ENCODE measurements at regions of chr3 and their contacts with region 1.

Region 1: DNA sequence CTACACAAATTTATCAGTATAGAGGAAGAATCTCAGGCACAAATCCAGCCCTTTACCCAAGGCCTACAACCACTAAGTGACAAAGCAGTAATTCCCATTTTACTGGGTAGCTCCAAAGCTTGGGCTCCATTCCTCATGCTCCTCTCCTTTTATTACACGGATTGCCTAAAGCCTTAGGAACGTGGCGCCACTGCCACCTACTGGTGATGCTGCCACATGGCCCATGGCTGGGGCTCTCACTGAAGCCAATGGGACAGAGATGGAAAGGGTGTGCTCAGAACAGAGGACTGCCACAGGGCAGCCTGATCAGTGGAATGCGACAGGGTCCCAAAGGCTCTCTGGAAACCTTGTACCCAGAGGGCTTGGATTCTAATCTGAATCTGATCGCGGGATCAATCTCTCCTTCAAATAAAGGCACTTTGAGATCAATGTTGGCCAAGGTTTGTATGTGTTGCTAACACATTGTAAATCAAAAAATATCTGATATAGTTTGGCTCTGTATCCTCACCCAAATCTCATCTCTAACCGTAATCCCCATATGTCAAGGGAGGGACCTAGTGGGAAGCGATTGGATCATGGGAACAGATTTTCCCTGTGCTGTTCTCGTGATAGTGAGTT is 33.5 kb upstream of the LYZL4 start:
- DNase-seq: peak; percentile 93
- ATAC-seq: peak; percentile 100
- H3K4me3 ChIP-seq: no peak overlapping the region
- H3K27ac ChIP-seq: no peak overlapping the region
- H3K4me1 ChIP-seq: no peaks in the 10 kb centered on the region
- H3K27me3 ChIP-seq: peaks cover 19% of the 10 kb centered on the region
- CTCF ChIP-seq: peak; percentile 98

Region 2: DNA sequence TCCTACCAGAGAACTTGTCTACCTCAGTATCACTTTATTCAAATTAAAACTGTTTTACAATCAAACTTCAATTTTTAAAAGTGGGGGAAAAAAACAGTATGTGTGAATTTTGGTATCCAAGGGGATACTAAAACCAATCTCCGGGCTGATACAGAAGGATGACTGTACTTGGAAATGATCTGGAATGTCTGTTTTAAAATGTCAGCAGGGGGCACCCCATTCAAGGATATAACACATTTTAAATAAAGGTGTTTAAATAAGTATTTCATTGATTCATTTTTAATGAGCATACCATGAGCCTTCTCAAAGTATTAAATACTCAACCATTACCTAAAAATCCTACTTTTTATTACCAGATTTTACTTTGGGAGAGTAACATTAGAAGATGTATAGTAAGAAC is 550.0 kb before region 1 on chr3:
- CTCF ChIA-PET with region 1: no interaction called
- POLR2A ChIA-PET with region 1: no interaction called
- intact Hi-C with region 1: loop called (anchors 10 kb)
- DNase-seq: peak; percentile 71
- ATAC-seq: peak; percentile 69
- H3K4me3 ChIP-seq: no peak overlapping the region
- H3K27ac ChIP-seq: no peak overlapping the region
- H3K4me1 ChIP-seq: no peaks in the 10 kb centered on the region
- H3K27me3 ChIP-seq: no peaks in the 10 kb centered on the region
- CTCF ChIP-seq: peak; percentile 77

Region 3: GRCh38 chr3:42247576-42248027 is 196.3 kb before region 1 on chr3:
- CTCF ChIA-PET with region 1: interaction called, 46 read pairs
- POLR2A ChIA-PET with region 1: no interaction called
- intact Hi-C with region 1: loop called (anchors 1 kb)
- DNase-seq: peak; percentile 88
- ATAC-seq: peak; percentile 77
- H3K4me3 ChIP-seq: no peak overlapping the region
- H3K27ac ChIP-seq: no peak overlapping the region
- H3K4me1 ChIP-seq: no peaks in the 10 kb centered on the region
- H3K27me3 ChIP-seq: peaks cover 8% of the 10 kb centered on the region
- CTCF ChIP-seq: peak; percentile 96

Region 4: GRCh38 chr3:42539869-42540714 is 96.2 kb after region 1 on chr3:
- CTCF ChIA-PET with region 1: no interaction called
- POLR2A ChIA-PET with region 1: no interaction called
- intact Hi-C with region 1: loop called (anchors 5 kb)
- DNase-seq: peak; percentile 78
- ATAC-seq: peak; percentile 30
- H3K4me3 ChIP-seq: no peak overlapping the region
- H3K27ac ChIP-seq: no peak overlapping the region
- H3K4me1 ChIP-seq: peaks cover 16% of the 10 kb centered on the region
- H3K27me3 ChIP-seq: no peaks in the 10 kb centered on the region
- CTCF ChIP-seq: peak; percentile 92

Measured in PC-3 (cell line).